A673 (cell line): ENCODE measurements at regions of chr2 and their contacts with region 1.

Region 1: DNA sequence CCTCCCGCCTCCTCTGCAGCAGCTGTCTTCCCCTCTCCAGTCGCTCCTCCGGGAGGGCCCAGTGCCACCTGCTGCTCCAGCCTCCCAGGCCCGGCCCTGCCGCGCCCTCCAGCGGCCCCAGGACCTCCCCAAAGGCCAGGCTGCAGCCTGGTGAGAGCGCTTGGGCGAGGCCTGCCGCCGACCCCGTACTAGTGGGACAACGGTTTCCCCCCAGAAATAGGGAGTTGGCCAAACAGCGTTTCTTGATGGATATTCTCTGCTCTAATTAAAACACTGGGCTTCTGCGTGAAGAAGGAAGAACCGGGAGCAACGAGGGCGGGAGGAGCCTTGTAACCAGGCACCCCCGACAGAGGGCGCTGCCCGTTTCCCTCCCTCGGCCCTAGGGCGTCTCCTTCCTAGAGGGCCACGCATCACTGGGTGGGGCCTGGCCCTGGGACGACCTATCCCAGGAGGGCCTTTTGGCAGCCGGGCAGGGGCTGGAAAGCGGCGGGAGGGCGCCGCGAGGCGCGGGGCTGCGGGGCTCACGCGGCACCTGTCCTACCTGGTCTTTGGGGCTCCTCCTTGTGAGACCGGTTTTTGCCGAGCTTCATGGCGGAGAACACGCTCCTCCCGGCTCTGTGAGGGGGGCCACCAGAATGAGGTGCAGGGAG is 25.4 kb upstream of the OTOF start:
- DNase-seq: peak; percentile 86
- H3K4me3 ChIP-seq: peak overlapping the region; percentile 47
- H3K27ac ChIP-seq: no peak overlapping the region
- H3K4me1 ChIP-seq: no peaks in the 10 kb centered on the region
- H3K27me3 ChIP-seq: no peaks in the 10 kb centered on the region
- CTCF ChIP-seq: peak; percentile 99

Region 2: GRCh38 chr2:26521054-26521912 is 17.9 kb after region 1 on chr2:
- CTCF ChIA-PET with region 1: no interaction called
- POLR2A ChIA-PET with region 1: no interaction called
- intact Hi-C with region 1: no loop called
- DNase-seq: peak; percentile 43
- H3K4me3 ChIP-seq: no peak overlapping the region
- H3K27ac ChIP-seq: no peak overlapping the region
- H3K4me1 ChIP-seq: no peaks in the 10 kb centered on the region
- H3K27me3 ChIP-seq: peaks cover 27% of the 10 kb centered on the region
- CTCF ChIP-seq: peak; percentile 47

Region 3: DNA sequence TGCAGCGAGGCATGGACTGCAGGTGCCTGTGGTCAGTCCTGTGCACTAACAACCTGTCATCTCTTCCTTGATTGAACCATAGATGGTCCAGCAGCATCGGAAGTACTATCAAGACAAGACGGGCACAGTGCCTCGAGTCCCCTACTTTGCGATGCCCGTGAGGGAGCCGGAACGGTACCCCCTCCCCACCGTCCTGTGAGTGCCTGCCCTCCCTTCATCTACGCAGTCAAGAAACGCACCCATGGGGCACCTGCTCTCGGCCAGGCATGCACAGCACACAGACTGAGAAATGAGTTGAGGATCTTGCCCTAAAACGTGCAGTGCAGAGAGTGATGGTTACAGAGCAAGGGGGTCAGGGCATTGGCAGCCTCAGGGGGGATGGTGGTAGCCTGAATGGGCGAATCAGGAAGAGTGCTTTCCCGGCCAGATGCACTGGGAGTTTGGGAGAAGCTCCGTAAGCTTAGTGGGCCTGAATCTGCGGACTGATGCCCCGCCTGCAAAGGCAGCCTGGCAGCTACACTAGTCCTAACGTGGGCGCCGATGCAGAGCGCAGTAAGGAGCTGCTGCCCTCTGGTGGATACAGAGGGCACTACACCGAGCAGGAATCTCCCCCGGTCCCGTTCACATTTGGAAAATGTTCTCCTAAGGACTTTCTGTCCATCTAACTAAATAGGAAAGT is 74.2 kb after region 1 on chr2:
- CTCF ChIA-PET with region 1: no interaction called
- POLR2A ChIA-PET with region 1: no interaction called
- intact Hi-C with region 1: loop called (anchors 2 kb)
- DNase-seq: peak; percentile 77
- H3K4me3 ChIP-seq: no peak overlapping the region
- H3K27ac ChIP-seq: no peak overlapping the region
- H3K4me1 ChIP-seq: no peaks in the 10 kb centered on the region
- H3K27me3 ChIP-seq: peaks cover under 1% of the 10 kb centered on the region
- CTCF ChIP-seq: peak; percentile 96

Region 4: GRCh38 chr2:26692279-26692896 is 189.0 kb after region 1 on chr2 and contains the start of gene KCNK3:
- CTCF ChIA-PET with region 1: no interaction called
- POLR2A ChIA-PET with region 1: no interaction called
- intact Hi-C with region 1: no loop called
- DNase-seq: peak; percentile 69
- H3K4me3 ChIP-seq: peak within 1 kb of the TSS; percentile 25
- H3K27ac ChIP-seq: no peak within 1 kb of the TSS
- H3K4me1 ChIP-seq: no peaks in the 10 kb centered on the region
- H3K27me3 ChIP-seq: peaks cover 52% of the 10 kb centered on the region
- CTCF ChIP-seq: no peak
- total RNA-seq, gene KCNK3: 0.13 and 0.31 TPM in 2 replicates